SK-N-SH (cell line): ENCODE measurements at regions of chr11 and their contacts with region 1.

Region 1: GRCh38 chr11:15650105-15650938 is 535.6 kb downstream of the INSC start:
- DNase-seq: peak; percentile 96
- H3K4me3 ChIP-seq: peak overlapping the region; percentile 34 to 40
- H3K27ac ChIP-seq: peak overlapping the region in 1 of 2 experiments; percentile 87; a peak in 2 of 4 replicates
- H3K4me1 ChIP-seq: peaks cover 0 to 20% of the 10 kb centered on the region in 2 experiments; a peak in 2 of 4 replicates
- H3K27me3 ChIP-seq: no peaks in the 10 kb centered on the region
- CTCF ChIP-seq: peak; percentile 77
- EP300 ChIP-seq: peak in 1 of 2 experiments; percentile 38; a peak in 1 of 4 replicates
- RAD21 ChIP-seq: peak; percentile 96

Region 2: DNA sequence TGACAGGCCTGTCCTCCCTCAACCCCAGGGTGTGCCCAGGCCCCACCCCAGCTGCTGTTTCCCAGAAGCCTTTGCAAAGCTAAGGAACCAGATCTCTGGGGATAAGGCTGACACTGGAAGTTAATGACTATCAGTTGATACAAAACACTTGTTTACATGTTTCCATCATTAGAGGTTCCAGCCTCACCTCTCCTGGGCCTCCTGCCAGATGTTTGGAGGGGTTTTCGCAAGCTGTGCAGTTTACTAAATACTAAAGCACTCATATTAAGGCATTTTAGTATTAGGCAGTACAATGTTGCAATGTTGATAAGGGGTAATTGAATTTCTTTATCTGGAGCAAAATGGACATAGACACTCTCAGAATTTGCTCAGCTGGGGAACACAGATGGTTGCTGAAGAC is 316.9 kb before region 1 on chr11:
- CTCF ChIA-PET with region 1: interaction called, 27 read pairs
- POLR2A ChIA-PET with region 1: no interaction called
- DNase-seq: peak; percentile 52
- H3K4me3 ChIP-seq: no peak overlapping the region
- H3K27ac ChIP-seq: peak overlapping the region in 1 of 2 experiments; percentile 69; a peak in 2 of 4 replicates
- H3K4me1 ChIP-seq: peaks cover 0 to 16% of the 10 kb centered on the region in 2 experiments; a peak in 2 of 4 replicates
- H3K27me3 ChIP-seq: no peaks in the 10 kb centered on the region
- CTCF ChIP-seq: no peak
- EP300 ChIP-seq: peak in 1 of 2 experiments; percentile 77; a peak in 2 of 4 replicates
- RAD21 ChIP-seq: no peak; the same call in none of the 2 replicates

Region 3: GRCh38 chr11:15535414-15535813 is 114.9 kb before region 1 on chr11:
- CTCF ChIA-PET with region 1: no interaction called
- POLR2A ChIA-PET with region 1: no interaction called
- DNase-seq: no peak
- H3K4me3 ChIP-seq: no peak overlapping the region
- H3K27ac ChIP-seq: no peak overlapping the region
- H3K4me1 ChIP-seq: peaks cover 0 to 2% of the 10 kb centered on the region in 2 experiments; a peak in 1 of 4 replicates
- H3K27me3 ChIP-seq: no peaks in the 10 kb centered on the region
- CTCF ChIP-seq: no peak
- EP300 ChIP-seq: no peak
- RAD21 ChIP-seq: no peak

Region 4: GRCh38 chr11:15685306-15685705 is 35.0 kb after region 1 on chr11:
- CTCF ChIA-PET with region 1: no interaction called
- POLR2A ChIA-PET with region 1: no interaction called
- DNase-seq: peak; percentile 14
- H3K4me3 ChIP-seq: no peak overlapping the region
- H3K27ac ChIP-seq: no peak overlapping the region
- H3K4me1 ChIP-seq: no peaks in the 10 kb centered on the region
- H3K27me3 ChIP-seq: no peaks in the 10 kb centered on the region
- CTCF ChIP-seq: no peak
- EP300 ChIP-seq: no peak
- RAD21 ChIP-seq: no peak

Region 5: DNA sequence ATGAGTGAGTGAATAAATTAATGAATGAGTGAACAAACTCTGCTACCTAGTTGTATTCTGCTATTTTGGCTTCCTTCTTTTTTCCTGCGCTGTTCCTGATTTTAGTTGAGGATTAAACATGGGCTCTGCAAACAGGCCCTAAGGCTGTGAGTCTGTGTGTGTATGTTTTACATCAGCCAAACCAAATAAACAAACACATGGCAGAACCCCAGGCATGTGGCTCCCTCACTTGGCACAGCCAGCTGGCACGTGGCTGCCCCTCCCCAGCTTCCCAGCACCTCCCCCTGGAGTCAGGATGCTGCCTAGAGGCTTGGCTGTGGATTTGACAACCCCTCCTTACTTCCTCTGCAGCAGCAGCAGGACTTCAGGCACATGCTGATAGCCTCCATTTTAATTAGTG is 57.6 kb after region 1 on chr11:
- CTCF ChIA-PET with region 1: interaction called, 13 read pairs
- POLR2A ChIA-PET with region 1: no interaction called
- DNase-seq: peak; percentile 85
- H3K4me3 ChIP-seq: no peak overlapping the region
- H3K27ac ChIP-seq: peak overlapping the region in 1 of 2 experiments; percentile 91; a peak in 2 of 4 replicates
- H3K4me1 ChIP-seq: peaks cover 0 to 18% of the 10 kb centered on the region in 2 experiments; a peak in 2 of 4 replicates
- H3K27me3 ChIP-seq: no peaks in the 10 kb centered on the region
- CTCF ChIP-seq: no peak
- EP300 ChIP-seq: peak in 1 of 2 experiments; percentile 96; a peak in 2 of 4 replicates
- RAD21 ChIP-seq: peak; percentile 39

Region 6: GRCh38 chr11:15837901-15838489 is 187.7 kb after region 1 on chr11:
- CTCF ChIA-PET with region 1: interaction called, 12 read pairs
- POLR2A ChIA-PET with region 1: interaction called, 3 read pairs
- DNase-seq: no peak
- H3K4me3 ChIP-seq: no peak overlapping the region
- H3K27ac ChIP-seq: peak overlapping the region in 1 of 2 experiments; percentile 95; a peak in 2 of 4 replicates
- H3K4me1 ChIP-seq: peaks cover 0 to 65% of the 10 kb centered on the region in 2 experiments; a peak in 2 of 4 replicates
- H3K27me3 ChIP-seq: no peaks in the 10 kb centered on the region
- CTCF ChIP-seq: no peak
- EP300 ChIP-seq: no peak
- RAD21 ChIP-seq: no peak

Region 7: GRCh38 chr11:16605894-16606783 is 955.8 kb after region 1 on chr11:
- CTCF ChIA-PET with region 1: interaction called, 37 read pairs
- POLR2A ChIA-PET with region 1: interaction called, 3 read pairs
- DNase-seq: peak; percentile 85
- H3K4me3 ChIP-seq: peak overlapping the region; percentile 62 to 73
- H3K27ac ChIP-seq: peak overlapping the region in 1 of 2 experiments; percentile 44; a peak in 2 of 4 replicates
- H3K4me1 ChIP-seq: peaks cover 0 to 19% of the 10 kb centered on the region in 2 experiments; a peak in 2 of 4 replicates
- H3K27me3 ChIP-seq: peaks cover 47% of the 10 kb centered on the region
- CTCF ChIP-seq: peak; percentile 98
- EP300 ChIP-seq: no peak
- RAD21 ChIP-seq: peak; percentile 81